PC-9 (cell line): ENCODE measurements at regions of chr1 and their contacts with region 1.

Region 1: DNA sequence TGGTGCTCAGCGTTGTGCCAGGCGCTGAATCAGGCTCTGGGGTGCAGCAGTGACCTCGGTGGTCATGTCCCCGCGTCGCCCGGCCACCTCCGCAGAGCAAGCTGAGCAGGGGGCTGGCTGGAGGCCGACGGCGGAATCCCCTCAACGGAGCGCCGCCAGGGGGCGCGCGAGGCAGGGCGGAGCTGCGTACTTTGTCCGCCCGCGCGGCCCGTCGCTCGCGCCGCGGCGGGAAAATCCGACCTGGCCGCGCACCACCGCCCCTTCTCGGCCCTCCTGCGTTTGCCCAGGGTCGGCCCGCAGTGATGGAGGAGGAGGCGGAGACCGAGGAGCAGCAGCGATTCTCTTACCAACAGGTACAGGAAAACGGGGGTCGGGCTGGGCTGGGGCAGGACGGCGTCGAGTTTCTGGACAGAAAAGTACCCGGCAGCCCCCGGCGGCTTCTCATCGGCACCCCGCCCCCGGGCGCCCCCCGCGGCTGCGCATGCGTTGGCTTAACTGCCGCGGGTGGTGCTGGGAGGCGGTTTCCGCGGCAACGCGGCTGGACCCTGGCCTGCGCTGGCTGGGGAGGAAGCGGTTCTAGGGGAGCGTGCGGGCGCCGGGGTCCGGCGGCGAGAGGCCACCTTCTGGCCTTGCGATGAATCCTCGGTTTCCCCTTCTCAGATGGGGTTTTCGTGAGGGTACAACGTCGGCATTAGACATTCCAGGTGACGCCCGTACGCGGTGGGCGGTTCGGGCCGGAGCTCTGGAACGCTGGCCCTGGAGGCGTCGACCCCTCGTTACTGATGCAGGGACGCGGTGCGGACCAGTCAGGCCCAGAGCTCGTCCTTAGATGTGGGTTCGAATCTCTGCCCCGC is at the start of gene CENPS:
- DNase-seq: peak; percentile 65 to 90
- H3K4me3 ChIP-seq: peak within 1 kb of the TSS; percentile 71
- H3K27ac ChIP-seq: peak within 1 kb of the TSS; percentile 26; the same call in 1 of the 2 replicates
- H3K4me1 ChIP-seq: peaks cover 10% of the 10 kb centered on the region
- H3K27me3 ChIP-seq: no peaks in the 10 kb centered on the region
- CTCF ChIP-seq: peak; percentile 82
- total RNA-seq, gene CENPS: 28.5 and 35.9 TPM in 2 replicates

Region 2: DNA sequence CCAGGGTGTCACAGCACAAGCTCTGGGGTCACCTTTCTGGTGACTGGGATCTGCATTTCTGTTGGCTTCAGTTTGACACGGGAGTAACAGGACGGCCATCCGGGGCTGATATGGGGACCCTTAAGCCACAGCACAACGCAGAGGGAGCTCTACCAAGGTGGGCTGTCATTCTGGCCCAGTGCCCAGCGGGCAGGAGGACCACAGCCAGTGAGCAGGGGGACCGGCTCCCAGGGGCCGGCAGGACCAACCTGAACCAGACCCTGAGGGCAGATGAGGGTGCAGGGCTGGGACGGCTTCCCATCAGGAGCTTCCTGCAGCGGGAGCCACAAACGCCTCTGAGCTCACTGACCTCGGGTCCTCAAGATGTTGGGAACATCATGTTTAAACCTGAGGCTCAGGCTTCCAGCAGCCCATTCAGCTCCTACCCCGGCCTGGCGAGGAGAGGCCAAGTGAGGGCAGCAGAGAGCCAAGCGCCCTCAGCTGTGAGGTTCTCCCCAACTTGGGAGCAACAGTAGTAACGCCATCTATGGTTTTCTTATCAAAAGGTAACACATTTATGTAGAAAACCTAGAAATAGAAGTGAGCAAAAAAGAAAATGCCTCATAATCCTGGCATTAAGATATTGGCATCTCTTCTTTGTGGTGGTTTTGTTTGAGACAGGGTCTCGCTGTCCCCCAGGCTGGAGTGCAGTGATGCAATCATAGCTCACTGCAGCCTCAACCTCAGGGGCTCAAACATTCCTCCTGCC is 815.0 kb before region 1 on chr1:
- CTCF ChIA-PET with region 1: no interaction called
- POLR2A ChIA-PET with region 1: no interaction called
- intact Hi-C with region 1: loop called (anchors 5 kb)
- DNase-seq: peak in 1 of 2 experiments; percentile 48
- H3K4me3 ChIP-seq: no peak overlapping the region
- H3K27ac ChIP-seq: no peak overlapping the region
- H3K4me1 ChIP-seq: no peaks in the 10 kb centered on the region
- H3K27me3 ChIP-seq: no peaks in the 10 kb centered on the region
- CTCF ChIP-seq: peak; percentile 67

Region 3: GRCh38 chr1:9874959-9875635 is 555.3 kb before region 1 on chr1:
- CTCF ChIA-PET with region 1: no interaction called
- POLR2A ChIA-PET with region 1: no interaction called
- intact Hi-C with region 1: loop called (anchors 1 kb)
- DNase-seq: peak; percentile 43 to 65
- H3K4me3 ChIP-seq: no peak overlapping the region
- H3K27ac ChIP-seq: no peak overlapping the region
- H3K4me1 ChIP-seq: peaks cover 14% of the 10 kb centered on the region
- H3K27me3 ChIP-seq: no peaks in the 10 kb centered on the region
- CTCF ChIP-seq: peak; percentile 90

Region 4: DNA sequence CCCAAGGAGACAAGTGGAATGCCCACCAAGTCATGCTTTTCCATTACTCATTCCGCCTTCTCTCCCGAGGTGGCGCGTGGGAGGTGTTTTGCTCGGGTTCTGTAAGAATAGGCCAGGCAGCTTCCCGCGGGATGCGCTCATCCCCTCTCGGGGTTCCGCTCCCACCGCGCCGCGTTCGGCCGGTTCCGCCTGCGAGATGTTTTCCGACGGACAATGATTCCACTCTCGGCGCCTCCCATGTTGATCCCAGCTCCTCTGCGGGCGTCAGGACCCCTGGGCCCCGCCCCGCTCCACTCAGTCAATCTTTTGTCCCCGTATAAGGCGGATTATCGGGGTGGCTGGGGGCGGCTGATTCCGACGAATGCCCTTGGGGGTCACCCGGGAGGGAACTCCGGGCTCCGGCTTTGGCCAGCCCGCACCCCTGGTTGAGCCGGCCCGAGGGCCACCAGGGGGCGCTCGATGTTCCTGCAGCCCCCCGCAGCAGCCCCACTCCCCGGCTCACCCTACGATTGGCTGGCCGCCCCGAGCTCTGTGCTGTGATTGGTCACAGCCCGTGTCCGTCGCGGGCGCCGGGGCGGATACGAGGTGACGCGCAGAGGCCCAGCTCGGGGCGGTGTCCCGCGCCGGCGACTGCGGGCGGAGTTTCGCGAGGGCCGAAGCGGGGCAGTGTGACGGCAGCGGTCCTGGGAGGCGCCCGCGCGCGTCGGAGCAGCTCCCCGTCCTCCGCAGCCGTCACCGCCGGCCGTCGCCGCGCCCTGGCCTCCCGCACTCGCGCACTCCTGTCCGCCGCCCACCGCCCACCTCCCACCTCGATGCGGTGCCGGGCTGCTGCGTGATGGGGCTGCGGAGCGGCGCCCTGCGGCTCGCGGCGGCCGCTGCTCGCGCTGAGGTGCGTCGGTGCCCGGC is 220.3 kb before region 1 on chr1 and contains the start of gene KIF1B:
- CTCF ChIA-PET with region 1: no interaction called
- POLR2A ChIA-PET with region 1: no interaction called
- intact Hi-C with region 1: loop called (anchors 1 kb)
- DNase-seq: peak; percentile 80 to 98
- H3K4me3 ChIP-seq: peak within 1 kb of the TSS; percentile 88
- H3K27ac ChIP-seq: peak within 1 kb of the TSS; percentile 45
- H3K4me1 ChIP-seq: peaks cover 11% of the 10 kb centered on the region
- H3K27me3 ChIP-seq: no peaks in the 10 kb centered on the region
- CTCF ChIP-seq: peak; percentile 88
- total RNA-seq, gene KIF1B: 20.6 and 22.7 TPM in 2 replicates

Region 5: DNA sequence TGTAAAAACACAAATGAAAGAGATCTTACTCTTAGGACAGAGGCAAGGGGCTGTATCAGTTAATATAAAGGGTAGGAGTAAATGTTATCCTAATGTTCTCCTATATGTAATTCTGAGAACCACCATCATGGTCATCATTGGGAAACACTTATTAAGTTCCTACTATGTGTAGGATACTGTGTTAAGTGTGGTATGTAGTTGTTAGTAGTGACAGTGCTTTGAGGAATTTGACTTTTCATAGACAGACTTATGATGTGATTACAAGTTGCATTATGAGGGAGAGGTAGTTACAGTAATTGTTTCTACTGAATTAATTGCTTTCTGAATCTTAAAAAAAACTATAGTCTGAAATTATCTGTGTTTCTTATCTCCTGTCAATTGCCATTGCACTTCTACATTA is 83.3 kb before region 1 on chr1:
- CTCF ChIA-PET with region 1: no interaction called
- POLR2A ChIA-PET with region 1: no interaction called
- intact Hi-C with region 1: no loop called
- DNase-seq: no peak
- H3K4me3 ChIP-seq: no peak overlapping the region
- H3K27ac ChIP-seq: no peak overlapping the region
- H3K4me1 ChIP-seq: no peaks in the 10 kb centered on the region
- H3K27me3 ChIP-seq: no peaks in the 10 kb centered on the region
- CTCF ChIP-seq: no peak

Region 6: DNA sequence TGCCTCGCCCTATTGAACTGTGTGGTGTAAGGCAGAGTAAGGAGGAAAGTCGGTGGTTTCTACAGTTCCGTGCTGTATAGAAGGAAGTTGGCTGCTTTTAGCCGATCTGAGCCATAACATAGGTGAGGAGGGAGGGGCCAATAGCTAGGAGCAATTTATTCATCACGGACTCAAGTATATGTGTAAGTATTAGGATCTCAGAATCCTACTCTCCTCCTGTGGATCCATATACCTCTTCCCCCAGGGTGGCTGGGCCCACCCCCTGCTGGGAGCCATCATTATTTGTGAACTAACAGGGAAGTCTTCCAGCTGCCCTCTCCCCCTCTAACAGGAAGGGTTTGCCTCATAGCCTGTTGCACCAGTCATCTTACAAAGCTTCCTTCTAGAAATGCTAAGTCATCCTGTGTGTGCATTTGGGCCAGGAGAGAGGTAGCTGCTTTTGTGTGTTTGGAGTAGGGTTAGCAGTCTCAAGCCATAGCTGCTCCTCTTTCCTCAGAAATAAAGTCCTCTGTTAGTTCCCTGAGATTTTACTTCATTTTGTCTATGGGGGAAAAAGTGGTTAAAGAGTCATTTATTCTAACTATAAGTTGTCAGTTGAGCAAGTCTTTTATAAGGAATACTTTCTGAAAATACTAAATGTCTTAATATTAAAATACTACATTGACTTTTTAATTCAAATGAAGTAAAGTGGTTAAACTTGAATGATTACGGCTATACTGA is 15.1 kb before region 1 on chr1:
- CTCF ChIA-PET with region 1: no interaction called
- POLR2A ChIA-PET with region 1: no interaction called
- intact Hi-C with region 1: no loop called
- DNase-seq: peak; percentile 87 to 96
- H3K4me3 ChIP-seq: peak overlapping the region; percentile 33; the same call in 1 of the 2 replicates
- H3K27ac ChIP-seq: peak overlapping the region; percentile 100
- H3K4me1 ChIP-seq: peaks cover 52% of the 10 kb centered on the region
- H3K27me3 ChIP-seq: no peaks in the 10 kb centered on the region
- CTCF ChIP-seq: no peak

Region 7: GRCh38 chr1:10472220-10473144 is 42.0 kb after region 1 on chr1 and contains the start of gene DFFA:
- CTCF ChIA-PET with region 1: interaction called, 3 read pairs
- POLR2A ChIA-PET with region 1: no interaction called
- intact Hi-C with region 1: loop called (anchors 2 kb)
- DNase-seq: peak; percentile 87 to 88
- H3K4me3 ChIP-seq: peak within 1 kb of the TSS; percentile 64
- H3K27ac ChIP-seq: peak within 1 kb of the TSS; percentile 60
- H3K4me1 ChIP-seq: peaks cover 17% of the 10 kb centered on the region
- H3K27me3 ChIP-seq: no peaks in the 10 kb centered on the region
- CTCF ChIP-seq: no peak
- total RNA-seq, gene DFFA: 35.2 and 36.8 TPM in 2 replicates

Region 8: DNA sequence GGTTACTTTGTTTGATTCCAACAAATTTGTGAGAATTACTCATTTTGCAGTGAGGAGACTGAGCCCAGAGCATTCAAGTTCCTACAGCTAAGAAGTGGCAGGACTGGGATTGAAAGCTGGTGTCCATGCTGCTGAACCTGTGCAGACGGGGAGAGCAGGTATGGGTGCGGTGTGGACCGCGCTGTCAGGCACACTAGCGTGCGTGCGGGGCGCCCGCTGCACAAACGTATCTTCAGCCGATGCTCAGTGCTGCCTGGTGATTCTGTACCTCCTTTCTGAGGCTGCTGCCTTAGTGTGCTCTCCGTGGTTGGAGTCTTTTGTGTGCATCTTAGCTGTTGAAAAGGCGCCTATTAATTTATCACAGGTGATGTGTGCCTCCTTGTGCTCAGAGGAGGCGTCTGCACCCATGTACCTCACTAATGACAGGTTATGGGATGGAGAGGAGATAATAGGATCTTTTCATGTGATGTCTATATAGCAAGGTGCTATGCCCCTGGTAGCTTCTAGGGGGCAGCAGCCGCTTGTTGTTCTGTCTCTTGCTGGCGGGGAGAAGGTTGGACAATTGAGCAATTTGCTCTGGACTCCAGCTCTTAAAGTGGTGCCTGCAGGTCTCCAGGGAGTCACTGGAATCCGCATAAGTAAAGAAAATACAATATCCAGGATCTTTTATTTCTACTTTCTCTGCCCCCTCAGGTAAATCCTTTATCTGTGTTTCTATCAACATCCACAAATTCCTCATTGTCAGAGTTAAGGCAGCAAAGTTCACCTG is 76.9 kb after region 1 on chr1:
- CTCF ChIA-PET with region 1: no interaction called
- POLR2A ChIA-PET with region 1: no interaction called
- intact Hi-C with region 1: no loop called
- DNase-seq: peak; percentile 45 to 49
- H3K4me3 ChIP-seq: no peak overlapping the region
- H3K27ac ChIP-seq: no peak overlapping the region
- H3K4me1 ChIP-seq: peaks cover 28% of the 10 kb centered on the region
- H3K27me3 ChIP-seq: no peaks in the 10 kb centered on the region
- CTCF ChIP-seq: peak; percentile 79